Endothelial cell of umbilical vein (primary cell): ENCODE measurements at regions of chr2 and their contacts with region 1.

Region 1: DNA sequence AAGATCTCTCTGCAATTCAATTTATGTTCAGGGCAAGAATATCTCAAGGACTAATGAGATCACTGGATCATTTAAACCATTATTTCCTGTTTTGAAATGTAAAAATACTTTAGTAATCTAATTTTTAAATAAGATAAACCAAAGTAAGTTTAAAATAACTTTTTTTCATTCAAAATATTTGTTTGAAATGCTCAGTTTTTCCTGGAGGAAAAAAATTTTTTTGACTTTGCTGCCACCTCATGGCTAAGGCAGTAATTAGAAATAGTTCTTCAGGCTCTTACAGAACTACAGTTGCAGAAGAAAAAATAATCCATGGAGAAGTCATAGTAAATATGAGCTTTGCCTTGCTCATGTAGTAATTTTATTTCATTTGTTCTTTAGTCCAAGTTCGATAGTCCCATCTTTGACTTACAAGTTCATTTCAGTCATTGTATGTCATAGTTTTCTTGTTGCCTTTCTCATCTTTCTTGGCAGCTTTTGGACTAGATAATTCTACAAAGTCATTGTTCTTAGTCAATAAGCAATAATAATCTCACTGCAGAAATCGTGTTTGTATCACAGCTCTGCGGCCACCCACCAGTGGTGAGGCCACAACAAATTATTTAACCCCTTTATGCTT is 127.4 kb downstream of the DPP4 start:
- DNase-seq: peak; percentile 67
- H3K4me3 ChIP-seq: no peak overlapping the region
- H3K27ac ChIP-seq: no peak overlapping the region
- H3K4me1 ChIP-seq: no peaks in the 10 kb centered on the region
- H3K27me3 ChIP-seq: peaks cover 0 to 3% of the 10 kb centered on the region in 2 experiments
- CTCF ChIP-seq: peak; percentile 32 to 39
- POLR2A ChIP-seq: no peak

Region 2: GRCh38 chr2:160928854-160929620 is 1017.6 kb before region 1 on chr2:
- CTCF ChIA-PET with region 1: no interaction called
- POLR2A ChIA-PET with region 1: no interaction called
- dilution Hi-C with region 1: no loop called
- intact Hi-C with region 1: no loop called
- DNase-seq: peak; percentile 45
- H3K4me3 ChIP-seq: no peak overlapping the region
- H3K27ac ChIP-seq: no peak overlapping the region
- H3K4me1 ChIP-seq: no peaks in the 10 kb centered on the region
- H3K27me3 ChIP-seq: no peaks in the 10 kb centered on the region
- CTCF ChIP-seq: no peak
- POLR2A ChIP-seq: no peak

Region 3: DNA sequence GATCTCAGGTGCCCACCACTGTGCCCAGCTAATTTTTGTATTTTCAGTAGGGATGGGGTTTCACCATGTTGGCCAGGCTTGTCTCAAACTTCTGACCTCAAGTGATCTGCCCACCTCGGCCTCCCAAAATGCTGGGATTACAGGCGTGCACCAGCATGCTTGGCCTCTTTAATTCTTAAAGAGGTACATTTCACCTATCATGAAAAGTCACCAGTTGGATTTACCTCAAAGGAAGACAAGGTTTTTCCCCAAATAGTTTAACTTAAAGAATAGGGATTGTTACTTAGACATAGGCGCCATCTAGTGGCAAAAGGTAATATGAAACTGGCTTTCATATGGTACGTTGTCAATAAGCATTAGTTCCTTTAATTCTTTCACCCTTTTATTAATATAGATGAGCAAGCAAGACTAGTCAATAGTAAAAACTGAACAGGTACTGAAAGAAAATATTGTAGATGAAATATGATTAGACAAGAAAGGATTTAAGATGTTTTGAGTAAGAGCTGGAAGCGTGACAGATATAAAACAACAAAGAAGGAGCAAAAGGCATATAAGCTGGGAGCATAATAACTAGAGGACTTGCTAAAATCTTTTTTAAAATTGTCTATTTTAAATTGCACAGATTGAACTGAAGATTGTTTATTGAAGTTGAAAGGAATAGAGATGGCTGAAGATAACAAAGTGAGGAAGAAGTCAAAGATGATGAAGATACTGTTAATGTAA is 673.4 kb before region 1 on chr2:
- CTCF ChIA-PET with region 1: interaction called, 3 read pairs
- POLR2A ChIA-PET with region 1: no interaction called
- dilution Hi-C with region 1: no loop called
- intact Hi-C with region 1: loop called (anchors 10 kb)
- DNase-seq: peak; percentile 72
- H3K4me3 ChIP-seq: no peak overlapping the region
- H3K27ac ChIP-seq: no peak overlapping the region
- H3K4me1 ChIP-seq: no peaks in the 10 kb centered on the region
- H3K27me3 ChIP-seq: no peaks in the 10 kb centered on the region
- CTCF ChIP-seq: peak; percentile 44 to 56
- POLR2A ChIP-seq: no peak

Region 4: DNA sequence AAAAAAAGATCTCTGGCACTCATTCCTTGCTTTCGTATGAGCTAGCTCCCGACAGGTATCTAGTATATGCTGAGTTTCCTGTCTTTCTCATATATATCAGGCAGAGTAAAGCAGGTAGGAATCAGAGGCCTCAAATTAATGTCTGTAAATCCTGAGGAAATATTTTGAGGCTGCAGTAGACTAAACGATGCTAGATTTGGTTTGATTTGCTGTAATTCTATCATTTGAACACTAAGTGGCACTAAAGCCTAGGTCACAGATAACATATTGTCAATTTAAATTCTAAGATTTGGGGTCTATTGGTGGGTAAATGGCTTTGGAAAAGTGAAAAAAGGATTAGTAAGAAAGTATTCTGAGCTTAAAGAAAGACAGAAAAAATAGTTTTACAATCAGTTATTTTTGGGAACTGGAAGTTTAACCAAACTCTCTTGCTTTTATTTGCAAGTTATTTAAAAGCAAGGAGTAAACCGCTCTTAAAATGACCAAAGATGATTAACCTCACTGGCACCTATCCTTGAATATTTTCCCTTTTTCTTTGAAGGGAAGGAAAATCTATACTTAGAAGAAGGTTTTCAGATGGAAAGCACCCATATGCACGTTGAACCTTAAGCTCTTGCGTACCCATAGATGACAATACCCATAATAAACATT is 360.0 kb before region 1 on chr2:
- CTCF ChIA-PET with region 1: interaction called, 173 read pairs
- POLR2A ChIA-PET with region 1: no interaction called
- dilution Hi-C with region 1: no loop called
- intact Hi-C with region 1: loop called (anchors 1 kb)
- DNase-seq: peak; percentile 42
- H3K4me3 ChIP-seq: no peak overlapping the region
- H3K27ac ChIP-seq: no peak overlapping the region
- H3K4me1 ChIP-seq: no peaks in the 10 kb centered on the region
- H3K27me3 ChIP-seq: no peaks in the 10 kb centered on the region
- CTCF ChIP-seq: peak; percentile 47
- POLR2A ChIP-seq: no peak

Region 5: DNA sequence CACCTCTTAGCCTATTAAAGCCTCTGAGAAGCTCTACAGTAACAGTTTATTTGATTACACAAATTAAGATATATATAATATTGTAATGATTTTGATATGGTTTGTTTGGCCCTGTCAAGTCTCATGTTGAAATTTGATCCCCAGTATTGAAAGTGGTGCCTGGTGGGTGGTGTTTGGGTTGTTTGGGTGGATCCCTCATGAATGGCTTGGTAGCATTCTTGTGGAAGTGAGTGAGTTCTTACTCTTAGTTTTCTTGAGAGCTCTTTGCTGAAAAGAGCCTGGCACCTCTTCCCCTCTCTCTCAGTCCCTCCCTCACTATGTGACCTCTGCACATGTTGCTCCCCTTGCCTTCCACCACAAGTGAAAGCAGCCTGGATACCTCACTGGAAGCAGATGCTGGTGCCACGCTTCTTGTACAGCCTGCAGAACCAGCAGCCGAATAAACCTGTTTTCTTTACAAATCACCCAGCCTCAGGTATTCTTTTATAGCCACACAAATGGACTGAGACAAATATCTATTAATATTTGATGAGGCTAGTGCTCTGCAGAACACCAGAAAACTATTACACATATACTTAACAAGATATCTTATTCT is 269.6 kb before region 1 on chr2:
- CTCF ChIA-PET with region 1: no interaction called
- POLR2A ChIA-PET with region 1: no interaction called
- dilution Hi-C with region 1: no loop called
- intact Hi-C with region 1: no loop called
- DNase-seq: no peak
- H3K4me3 ChIP-seq: no peak overlapping the region
- H3K27ac ChIP-seq: no peak overlapping the region
- H3K4me1 ChIP-seq: no peaks in the 10 kb centered on the region
- H3K27me3 ChIP-seq: no peaks in the 10 kb centered on the region
- CTCF ChIP-seq: no peak
- POLR2A ChIP-seq: no peak

Region 6: GRCh38 chr2:161905389-161906046 is 41.1 kb before region 1 on chr2:
- CTCF ChIA-PET with region 1: interaction called, 3 read pairs
- POLR2A ChIA-PET with region 1: no interaction called
- dilution Hi-C with region 1: no loop called
- intact Hi-C with region 1: loop called (anchors 1 kb)
- DNase-seq: peak; percentile 95
- H3K4me3 ChIP-seq: peak overlapping the region in 1 of 3 experiments; percentile 19
- H3K27ac ChIP-seq: peak overlapping the region; percentile 87
- H3K4me1 ChIP-seq: peaks cover 15% of the 10 kb centered on the region
- H3K27me3 ChIP-seq: no peaks in the 10 kb centered on the region
- CTCF ChIP-seq: no peak
- POLR2A ChIP-seq: no peak